ENCODE measurements at regions of chr12 and their contacts with region 1.

Region 1: GRCh38 chr12:48157018-48157888 is at the start of gene ASB8:
- DNase-seq: peak; percentile 98 to 100 (median 99)
- ATAC-seq: peak; percentile 87 to 96 (median 92)
- H3K4me3 ChIP-seq: peak within 1 kb of the TSS; percentile 89 to 97
- H3K4me3 Mint-ChIP-seq: peak within 1 kb of the TSS; percentile 94 to 96 (median 95)
- H3K27ac ChIP-seq: peak within 1 kb of the TSS; percentile 87
- H3K27ac Mint-ChIP-seq: peak within 1 kb of the TSS; percentile 99
- H3K4me1 ChIP-seq: peaks cover 8 to 26% of the 10 kb centered on the region in 2 experiments
- H3K4me1 Mint-ChIP-seq: peaks cover 52 to 58% (median 58%) of the 10 kb centered on the region in 3 donors
- H3K27me3 ChIP-seq: no peaks in the 10 kb centered on the region
- H3K27me3 Mint-ChIP-seq: no peaks in the 10 kb centered on the region
- total RNA-seq, gene ASB8: 50.0 to 59.7 (median 58.9) TPM

Region 2: DNA sequence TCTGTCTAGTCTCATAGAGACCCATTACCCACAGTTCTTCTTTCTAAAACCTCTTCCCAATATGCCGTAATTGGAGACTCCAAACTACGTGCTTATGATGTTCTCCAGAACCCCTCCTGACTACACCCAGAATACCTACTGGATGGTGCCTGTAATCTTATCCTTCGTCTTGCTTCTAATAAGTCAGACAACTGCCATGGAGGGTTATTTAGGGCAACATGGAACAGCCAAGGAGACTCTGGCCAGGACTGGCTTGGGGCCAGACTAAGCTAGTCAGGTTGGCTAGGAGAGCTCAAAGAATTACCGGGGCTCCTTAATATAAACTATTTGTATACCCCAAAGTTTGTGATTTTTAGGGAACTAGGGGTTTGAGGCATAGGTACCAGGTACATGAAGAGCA is 31.3 kb before region 1 on chr12:
- CTCF ChIA-PET with region 1: no interaction called
- POLR2A ChIA-PET with region 1: no interaction called
- DNase-seq: no peak
- ATAC-seq: no peak
- H3K4me3 ChIP-seq: no peak overlapping the region
- H3K4me3 Mint-ChIP-seq: no peak overlapping the region
- H3K27ac ChIP-seq: no peak overlapping the region
- H3K27ac Mint-ChIP-seq: no peak overlapping the region
- H3K4me1 ChIP-seq: no peaks in the 10 kb centered on the region
- H3K4me1 Mint-ChIP-seq: peaks cover 0 to 2% (median 0%) of the 10 kb centered on the region in 3 donors
- H3K27me3 ChIP-seq: no peaks in the 10 kb centered on the region
- H3K27me3 Mint-ChIP-seq: no peaks in the 10 kb centered on the region

Region 3: GRCh38 chr12:48183091-48183875 is 26.0 kb after region 1 on chr12 and contains the start of gene CCDC184:
- CTCF ChIA-PET with region 1: interaction called in 1 of 2 experiments, 13 read pairs
- POLR2A ChIA-PET with region 1: no interaction called
- DNase-seq: peak; percentile 59 to 89 (median 68)
- ATAC-seq: peak; percentile 84 to 86 (median 86)
- H3K4me3 ChIP-seq: peak within 1 kb of the TSS; percentile 85 to 91
- H3K4me3 Mint-ChIP-seq: peak within 1 kb of the TSS; percentile 92 to 93 (median 93)
- H3K27ac ChIP-seq: peak within 1 kb of the TSS; percentile 70
- H3K27ac Mint-ChIP-seq: peak within 1 kb of the TSS; percentile 65 to 84
- H3K4me1 ChIP-seq: peaks cover 5 to 21% of the 10 kb centered on the region in 2 experiments
- H3K4me1 Mint-ChIP-seq: peaks cover 15 to 16% (median 15%) of the 10 kb centered on the region in 3 donors
- H3K27me3 ChIP-seq: peaks cover 21 to 32% of the 10 kb centered on the region in 2 experiments
- H3K27me3 Mint-ChIP-seq: peaks cover 28 to 35% of the 10 kb centered on the region in 2 donors
- total RNA-seq, gene CCDC184: 0.13 to 5.3 (median 0.38) TPM

Region 4: DNA sequence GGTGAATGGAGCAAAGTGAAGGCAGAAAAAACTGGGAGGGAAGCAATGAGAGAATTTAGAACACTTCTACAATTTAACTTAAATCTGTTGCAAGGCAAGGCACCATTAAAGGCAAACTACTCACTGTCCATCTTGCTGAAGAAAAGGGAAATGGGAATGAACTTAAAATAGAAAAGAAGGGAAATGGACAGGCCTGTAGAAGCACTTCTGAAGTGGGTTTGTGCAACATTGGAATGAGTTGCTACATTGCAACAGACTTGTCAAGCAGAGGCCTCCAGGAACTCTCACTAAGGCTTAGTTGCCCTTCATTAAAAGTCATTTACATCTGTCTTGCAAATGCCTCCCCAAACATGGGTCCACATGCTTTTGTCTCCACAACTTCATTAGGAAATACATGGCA is 59.5 kb after region 1 on chr12:
- CTCF ChIA-PET with region 1: no interaction called
- POLR2A ChIA-PET with region 1: no interaction called
- DNase-seq: no peak
- ATAC-seq: no peak
- H3K4me3 ChIP-seq: no peak overlapping the region
- H3K4me3 Mint-ChIP-seq: no peak overlapping the region
- H3K27ac ChIP-seq: no peak overlapping the region
- H3K27ac Mint-ChIP-seq: no peak overlapping the region
- H3K4me1 ChIP-seq: peaks cover 5 to 7% of the 10 kb centered on the region in 2 experiments
- H3K4me1 Mint-ChIP-seq: peaks cover 11 to 13% (median 12%) of the 10 kb centered on the region in 3 donors
- H3K27me3 ChIP-seq: peaks cover 0 to 8% of the 10 kb centered on the region in 2 experiments
- H3K27me3 Mint-ChIP-seq: peaks cover 7 to 12% of the 10 kb centered on the region in 2 donors

Region 5: GRCh38 chr12:49264738-49265515 is 1107.7 kb after region 1 on chr12 and contains the start of gene TUBA1C:
- CTCF ChIA-PET with region 1: no interaction called
- POLR2A ChIA-PET with region 1: interaction called in 1 of 2 experiments, 12 read pairs
- DNase-seq: peak; percentile 44 to 89 (median 70)
- ATAC-seq: peak; percentile 91 to 93 (median 92)
- H3K4me3 ChIP-seq: peak within 1 kb of the TSS; percentile 79 to 82
- H3K4me3 Mint-ChIP-seq: peak within 1 kb of the TSS; percentile 91 to 97 (median 94)
- H3K27ac ChIP-seq: peak within 1 kb of the TSS; percentile 79
- H3K27ac Mint-ChIP-seq: peak within 1 kb of the TSS; percentile 92 to 96
- H3K4me1 ChIP-seq: peaks cover 2 to 33% of the 10 kb centered on the region in 2 experiments
- H3K4me1 Mint-ChIP-seq: peaks cover 19 to 36% (median 27%) of the 10 kb centered on the region in 3 donors
- H3K27me3 ChIP-seq: no peaks in the 10 kb centered on the region
- H3K27me3 Mint-ChIP-seq: no peaks in the 10 kb centered on the region
- total RNA-seq, gene TUBA1C: 16.4 to 53.7 (median 48.4) TPM

Measured in T-cell (primary cell).